GM10248 (cell line): ENCODE measurements at regions of chr12 and their contacts with region 1.

Region 1: DNA sequence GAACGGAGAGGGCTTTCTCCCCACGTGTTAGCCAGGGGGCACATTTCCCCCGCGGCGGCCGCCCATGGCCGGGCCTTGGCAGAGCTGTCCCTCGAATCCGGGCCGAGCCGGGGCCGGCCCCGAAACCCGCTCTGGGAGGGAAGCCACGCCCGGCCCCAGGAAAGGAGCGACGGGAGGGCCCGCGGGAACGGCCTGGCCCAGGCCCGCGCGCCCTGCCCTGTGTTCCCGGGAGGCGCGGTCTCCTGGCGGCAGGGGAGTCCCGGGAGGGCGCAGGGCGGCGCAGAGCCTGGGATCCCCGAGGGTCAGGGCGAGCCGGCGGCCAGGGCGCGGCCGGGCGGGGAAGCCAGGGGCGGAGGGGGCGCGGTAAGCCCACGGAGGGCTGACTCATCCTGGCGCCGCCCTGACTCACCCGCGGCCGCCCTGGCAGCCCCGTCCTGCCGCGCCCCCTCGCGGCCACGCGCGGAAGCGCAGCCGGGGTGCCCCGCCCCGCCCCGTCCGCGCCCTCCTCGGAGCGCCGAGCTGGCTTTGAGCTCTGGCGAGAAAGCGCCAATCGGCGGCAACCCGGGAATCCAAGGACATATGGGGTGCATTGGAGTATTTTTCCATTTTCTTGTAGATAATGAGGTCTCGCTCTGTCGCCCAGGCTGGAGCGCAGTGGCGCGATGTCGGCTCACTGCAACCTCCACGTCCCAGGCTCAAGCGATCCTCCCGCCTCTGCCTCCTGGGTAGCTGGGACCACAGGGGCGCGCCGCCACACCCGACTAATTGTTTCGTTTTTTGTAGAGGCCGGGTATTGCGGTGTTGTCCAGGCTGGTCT is 31.8 kb upstream of the PLEKHG6 start:
- DNase-seq: peak; percentile 91
- CTCF ChIP-seq: peak; percentile 88

Region 2: DNA sequence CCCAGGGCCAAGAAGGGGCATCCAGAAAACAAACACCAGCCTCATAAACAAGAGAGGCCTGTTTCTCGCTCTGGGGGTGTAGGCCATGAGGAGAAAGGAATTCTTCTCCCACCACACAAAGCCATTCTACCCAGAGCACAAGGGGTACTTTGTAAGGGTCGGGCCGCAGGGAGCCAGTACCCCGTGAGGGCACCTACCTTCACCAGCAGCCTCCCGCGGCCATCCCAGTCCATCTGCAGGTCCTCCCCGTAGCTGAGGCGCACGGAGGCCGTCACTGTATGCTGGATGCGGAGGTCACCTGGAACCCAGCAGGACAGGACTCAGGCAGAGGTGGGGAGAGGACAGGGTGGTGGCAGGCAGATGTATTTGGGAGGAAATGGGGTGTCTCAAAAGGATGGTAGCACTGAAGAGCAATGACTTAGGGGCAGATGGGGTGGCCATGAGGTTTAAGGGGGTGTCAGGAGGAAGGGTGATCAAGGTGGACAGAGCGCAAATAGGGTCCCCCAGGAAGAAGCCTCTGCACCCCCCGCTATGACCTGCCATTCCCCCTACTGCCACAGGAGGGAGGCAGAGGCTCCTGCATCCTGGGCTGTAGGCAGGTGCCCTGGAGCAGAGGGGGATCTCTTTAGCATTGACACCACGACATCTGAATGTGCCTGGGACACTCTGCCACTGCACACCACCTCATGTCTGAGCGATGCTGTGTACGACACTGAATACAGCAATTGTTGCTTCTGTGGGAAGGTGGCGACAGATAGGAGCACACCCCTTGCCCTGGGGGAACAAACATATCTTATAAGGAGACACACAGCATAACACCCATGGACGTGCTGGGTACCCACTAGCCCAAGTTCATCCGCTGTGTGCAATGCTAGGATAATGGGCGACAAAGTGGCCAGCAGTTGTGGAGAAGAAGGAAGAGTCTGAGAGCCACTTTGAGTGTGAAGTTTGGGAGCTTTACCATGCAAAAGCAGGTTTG is 215.6 kb before region 1 on chr12:
- CTCF ChIA-PET with region 1: interaction called, 34 read pairs
- POLR2A ChIA-PET with region 1: no interaction called
- DNase-seq: peak; percentile 82
- CTCF ChIP-seq: peak; percentile 88

Region 3: GRCh38 chr12:6205144-6205539 is 73.5 kb before region 1 on chr12:
- CTCF ChIA-PET with region 1: interaction called, 13 read pairs
- POLR2A ChIA-PET with region 1: no interaction called
- DNase-seq: no peak
- CTCF ChIP-seq: no peak

Region 4: GRCh38 chr12:6267139-6267721 is 11.4 kb before region 1 on chr12:
- CTCF ChIA-PET with region 1: interaction called, 28 read pairs
- POLR2A ChIA-PET with region 1: interaction called, 3 read pairs
- DNase-seq: peak; percentile 45
- CTCF ChIP-seq: no peak

Region 5: DNA sequence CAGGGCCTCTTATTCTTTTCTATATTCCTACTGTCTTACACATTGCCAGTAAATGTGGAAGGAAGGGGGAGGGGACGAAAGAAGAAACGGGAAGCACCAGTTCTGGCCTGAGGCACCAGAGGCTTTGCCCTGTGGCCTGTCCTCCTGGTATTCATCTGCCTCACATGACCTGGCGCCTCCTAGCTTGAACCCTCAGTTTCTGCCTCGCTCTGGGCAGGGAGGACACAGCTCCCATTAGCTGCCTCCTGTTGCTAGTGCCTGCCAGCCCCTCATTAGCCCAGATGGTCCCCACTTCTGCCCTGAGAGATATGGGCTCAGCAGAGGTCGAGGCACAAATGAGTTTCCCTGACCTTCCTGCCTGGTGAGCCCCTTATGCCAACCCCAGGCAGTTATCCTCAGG is 28.9 kb after region 1 on chr12:
- CTCF ChIA-PET with region 1: interaction called, 12 read pairs
- POLR2A ChIA-PET with region 1: no interaction called
- DNase-seq: no peak
- CTCF ChIP-seq: no peak

Region 6: DNA sequence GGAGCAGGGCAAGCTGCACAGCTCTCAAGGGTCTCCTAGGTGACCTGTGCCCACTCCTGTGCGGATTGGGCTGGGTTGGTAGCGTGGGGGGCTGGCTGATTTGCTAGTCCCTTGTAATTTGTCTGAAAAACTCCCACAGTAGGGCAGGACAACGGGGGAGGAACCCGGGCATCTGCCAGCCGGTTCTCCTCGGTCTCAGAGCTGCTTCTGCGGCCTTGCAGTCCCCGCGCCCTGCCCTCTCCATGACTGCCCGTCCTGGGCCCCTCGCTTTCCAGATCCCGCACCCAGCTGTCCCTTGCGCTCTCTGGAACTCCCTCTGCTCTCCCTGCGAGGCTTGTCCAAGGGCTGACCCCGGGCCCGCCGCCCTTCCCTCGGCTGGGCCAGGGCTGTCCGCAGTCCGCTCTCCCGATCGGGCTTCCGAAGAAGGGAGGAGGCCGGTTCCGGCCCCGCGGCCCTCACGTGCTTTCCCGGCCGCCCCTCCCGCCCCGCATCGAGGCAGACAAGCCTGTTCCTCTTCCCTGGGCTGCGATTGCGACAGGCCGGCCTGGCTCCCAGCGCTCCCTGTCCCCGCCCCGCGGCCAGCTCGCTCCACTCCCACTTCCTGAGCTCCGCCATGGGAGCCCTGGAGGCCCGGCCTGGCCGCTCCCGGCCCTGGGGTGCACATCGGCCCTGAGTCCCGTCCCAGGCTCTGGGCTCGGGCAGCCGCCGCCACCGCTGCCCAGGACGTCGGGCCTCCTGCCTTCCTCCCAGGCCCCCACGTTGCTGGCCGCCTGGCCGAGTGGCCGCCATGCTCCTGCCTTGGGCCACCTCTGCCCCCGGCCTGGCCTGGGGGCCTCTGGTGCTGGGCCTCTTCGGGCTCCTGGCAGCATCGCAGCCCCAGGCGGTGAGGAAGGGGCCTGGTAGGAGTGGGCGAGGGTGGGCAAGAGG is 105.2 kb after region 1 on chr12 and contains the start of gene LTBR:
- CTCF ChIA-PET with region 1: no interaction called
- POLR2A ChIA-PET with region 1: no interaction called
- DNase-seq: peak; percentile 36
- CTCF ChIP-seq: no peak